ENCODE measurements at regions of chr15 and their contacts with region 1.

Region 1: GRCh38 chr15:81265944-81266775 is 57.8 kb downstream of the STARD5 start:
- DNase-seq: peak; percentile 38 to 85
- H3K4me3 ChIP-seq: peak overlapping the region; percentile 1 to 18
- H3K27ac ChIP-seq: no peak overlapping the region
- H3K4me1 ChIP-seq: peaks cover 0 to 5% of the 10 kb centered on the region in 2 donors
- H3K27me3 ChIP-seq: no peaks in the 10 kb centered on the region
- CTCF ChIP-seq: peak; percentile 68 to 89 (median 81)

Region 2: GRCh38 chr15:81106560-81106959 is 159.6 kb before region 1 on chr15:
- intact Hi-C with region 1: loop called (anchors 10 kb)
- DNase-seq: no peak
- H3K4me3 ChIP-seq: no peak overlapping the region
- H3K27ac ChIP-seq: no peak overlapping the region
- H3K4me1 ChIP-seq: no peaks in the 10 kb centered on the region
- H3K27me3 ChIP-seq: no peaks in the 10 kb centered on the region
- CTCF ChIP-seq: peak; percentile 48 to 65 (median 52)

Region 3: GRCh38 chr15:81155375-81156218 is 110.6 kb before region 1 on chr15:
- intact Hi-C with region 1: loop called (anchors 2 kb)
- DNase-seq: peak in 1 of 2 donors; percentile 70
- H3K4me3 ChIP-seq: no peak overlapping the region
- H3K27ac ChIP-seq: no peak overlapping the region
- H3K4me1 ChIP-seq: peaks cover 0 to under 1% of the 10 kb centered on the region in 2 donors
- H3K27me3 ChIP-seq: no peaks in the 10 kb centered on the region
- CTCF ChIP-seq: peak; percentile 15 to 51 (median 35)

Region 4: GRCh38 chr15:81323944-81324881 is 58.1 kb after region 1 on chr15 and contains the start of gene STARD5:
- intact Hi-C with region 1: no loop called
- DNase-seq: peak; percentile 96 to 100
- H3K4me3 ChIP-seq: peak within 1 kb of the TSS; percentile 68 to 76
- H3K27ac ChIP-seq: peak within 1 kb of the TSS; percentile 49 to 71
- H3K4me1 ChIP-seq: peaks cover 5 to 7% of the 10 kb centered on the region in 2 donors
- H3K27me3 ChIP-seq: no peaks in the 10 kb centered on the region
- CTCF ChIP-seq: no peak
- total RNA-seq, gene STARD5: 4.8 TPM

Measured in ascending aorta (tissue), 2 donors.